Activated T-helper 1 cell treated with anti-CD3 and anti-CD28 coated beads, Interleukin-12 subunit alpha, Interleukin-12 subunit beta, Interleukin-2, Interleukin-4 antibody, amounts not matched to agents 30 ng/mL and 10 ng/mL and 1 ng/mL, durations not matched to agents 14 hours and 24 hours and 36 hours (primary cell): ENCODE measurements at regions of chr19 and their contacts with region 1.

Region 1: DNA sequence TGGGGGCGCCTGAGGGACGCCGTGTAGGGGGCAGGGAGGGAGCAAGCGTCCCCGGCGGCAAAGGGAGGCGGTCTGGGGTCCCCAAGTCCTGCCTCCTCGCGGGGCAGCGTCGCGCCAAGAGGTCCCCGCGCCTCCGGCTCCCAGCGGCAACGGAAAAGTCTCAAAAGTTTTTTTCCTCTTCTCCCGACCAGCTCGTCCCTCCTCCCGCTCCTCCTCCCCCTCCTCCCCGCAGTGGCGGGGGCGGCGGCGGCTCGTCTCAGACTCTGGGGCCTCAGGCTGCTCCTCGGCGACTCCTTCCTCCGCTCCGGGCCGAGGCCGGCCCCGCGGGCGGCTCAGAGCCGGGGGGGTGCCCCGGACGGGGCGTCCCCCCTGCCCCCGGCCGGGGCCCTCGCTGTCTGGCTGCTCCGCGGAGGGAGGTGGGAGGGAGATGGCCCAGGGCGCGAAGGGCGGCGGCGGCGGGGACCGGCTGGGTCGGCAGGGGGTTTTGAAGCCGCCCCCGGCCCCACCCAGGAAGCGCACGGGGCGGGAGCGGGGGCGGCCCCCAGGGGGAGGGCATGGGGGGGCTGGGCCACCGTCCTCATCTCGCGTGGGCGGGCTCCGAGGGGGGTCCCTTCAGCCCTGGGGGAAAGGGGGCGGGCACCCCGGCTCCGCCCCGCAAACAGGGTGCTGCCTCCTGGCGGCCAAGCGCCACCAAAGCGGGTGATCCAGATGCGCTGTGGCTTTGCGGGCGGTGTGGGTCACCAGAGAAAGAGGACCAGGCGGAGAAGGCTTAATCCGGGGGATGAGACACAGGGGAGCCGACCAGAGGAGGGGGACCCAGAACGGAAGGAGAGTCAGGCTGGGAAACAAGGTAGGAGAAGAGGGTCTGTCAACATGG is at the start of gene TGFB1:
- DNase-seq: peak; percentile 90
- H3K4me3 Mint-ChIP-seq: peak within 1 kb of the TSS; percentile 95
- H3K27ac Mint-ChIP-seq: peak within 1 kb of the TSS; percentile 90
- H3K4me1 Mint-ChIP-seq: peaks cover 68% of the 10 kb centered on the region
- H3K27me3 Mint-ChIP-seq: no peaks in the 10 kb centered on the region
- total RNA-seq, gene TGFB1: 108 and 112 TPM in 2 replicates

Region 2: GRCh38 chr19:40614622-40615411 is 738.9 kb before region 1 on chr19:
- intact Hi-C with region 1: loop called (anchors 5 kb)
- DNase-seq: peak; percentile 75
- H3K4me3 Mint-ChIP-seq: peak overlapping the region; percentile 97
- H3K27ac Mint-ChIP-seq: peak overlapping the region; percentile 100
- H3K4me1 Mint-ChIP-seq: peaks cover 41% of the 10 kb centered on the region
- H3K27me3 Mint-ChIP-seq: no peaks in the 10 kb centered on the region

Region 3: GRCh38 chr19:41206926-41207750 is 146.6 kb before region 1 on chr19:
- intact Hi-C with region 1: loop called (anchors 5 kb)
- DNase-seq: no peak
- H3K4me3 Mint-ChIP-seq: no peak overlapping the region
- H3K27ac Mint-ChIP-seq: no peak overlapping the region
- H3K4me1 Mint-ChIP-seq: peaks cover 18% of the 10 kb centered on the region
- H3K27me3 Mint-ChIP-seq: no peaks in the 10 kb centered on the region

Region 4: GRCh38 chr19:41327576-41328156 is 26.0 kb before region 1 on chr19:
- intact Hi-C with region 1: loop called (anchors 1 kb)
- DNase-seq: peak; percentile 67
- H3K4me3 Mint-ChIP-seq: peak overlapping the region; percentile 76
- H3K27ac Mint-ChIP-seq: peak overlapping the region; percentile 95
- H3K4me1 Mint-ChIP-seq: peaks cover 59% of the 10 kb centered on the region
- H3K27me3 Mint-ChIP-seq: no peaks in the 10 kb centered on the region

Region 5: DNA sequence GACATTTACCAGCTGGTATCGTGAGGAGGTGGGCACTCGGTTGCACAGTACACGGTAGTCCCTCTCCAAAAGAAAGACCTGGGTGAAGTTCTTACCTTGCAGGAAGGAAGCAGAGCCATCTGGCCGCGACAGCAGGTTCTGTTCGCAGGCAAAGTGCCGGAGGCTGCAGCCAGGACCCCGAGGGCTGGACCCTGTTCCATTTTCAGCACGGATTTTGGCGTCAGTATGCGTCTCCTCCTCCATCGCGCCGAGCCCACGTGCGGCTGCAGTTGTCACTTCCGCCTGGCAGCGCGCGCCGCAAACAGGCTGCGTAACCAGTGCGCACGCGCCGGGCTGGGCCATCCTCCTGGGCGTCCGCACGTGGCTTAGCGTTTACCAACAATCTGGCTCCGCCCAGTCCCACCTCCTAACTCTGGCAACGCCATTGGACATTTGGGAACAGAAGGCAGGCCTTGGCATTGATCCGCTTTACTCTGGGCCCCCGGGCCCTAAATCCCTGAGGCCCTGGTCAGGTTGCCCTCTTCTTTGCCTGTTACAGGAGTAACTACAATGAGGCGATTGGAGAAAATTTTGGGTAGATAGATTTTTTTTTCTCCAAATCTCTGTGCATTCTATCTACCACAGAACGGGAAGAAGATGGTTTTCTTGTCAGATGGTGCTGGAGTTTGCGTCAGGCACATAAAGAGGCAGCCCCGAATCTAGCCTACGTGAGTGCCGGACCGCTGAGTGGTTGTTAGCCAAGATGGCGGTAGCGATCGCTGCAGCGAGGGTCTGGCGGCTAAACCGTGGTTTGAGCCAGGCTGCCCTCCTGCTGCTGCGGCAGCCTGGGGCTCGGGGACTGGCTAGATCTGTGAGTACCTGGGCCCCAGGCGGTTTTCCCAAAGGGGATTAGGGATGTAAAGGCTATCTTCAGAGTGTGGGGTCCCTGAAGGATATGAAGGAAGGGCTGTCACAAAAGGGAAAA is 43.7 kb after region 1 on chr19 and contains the starts of genes BCKDHA and EXOSC5:
- intact Hi-C with region 1: loop called (anchors 1 kb)
- DNase-seq: peak; percentile 99
- H3K4me3 Mint-ChIP-seq: peak within 1 kb of the TSS; percentile 97
- H3K27ac Mint-ChIP-seq: peak within 1 kb of the TSS; percentile 99
- H3K4me1 Mint-ChIP-seq: peaks cover 28% of the 10 kb centered on the region
- H3K27me3 Mint-ChIP-seq: no peaks in the 10 kb centered on the region
- total RNA-seq, gene BCKDHA: 14.6 and 22.7 TPM in 2 replicates
- total RNA-seq, gene EXOSC5: 59.3 and 66.6 TPM in 2 replicates

Region 6: GRCh38 chr19:41554907-41555306 is 201.2 kb after region 1 on chr19:
- intact Hi-C with region 1: loop called (anchors 5 kb)
- DNase-seq: no peak
- H3K4me3 Mint-ChIP-seq: peak overlapping the region; percentile 55
- H3K27ac Mint-ChIP-seq: peak overlapping the region; percentile 66
- H3K4me1 Mint-ChIP-seq: peaks cover 81% of the 10 kb centered on the region
- H3K27me3 Mint-ChIP-seq: no peaks in the 10 kb centered on the region